CD4-positive, alpha-beta memory T cell (primary cell): ENCODE measurements at regions of chr2 and their contacts with region 1.

Region 1: DNA sequence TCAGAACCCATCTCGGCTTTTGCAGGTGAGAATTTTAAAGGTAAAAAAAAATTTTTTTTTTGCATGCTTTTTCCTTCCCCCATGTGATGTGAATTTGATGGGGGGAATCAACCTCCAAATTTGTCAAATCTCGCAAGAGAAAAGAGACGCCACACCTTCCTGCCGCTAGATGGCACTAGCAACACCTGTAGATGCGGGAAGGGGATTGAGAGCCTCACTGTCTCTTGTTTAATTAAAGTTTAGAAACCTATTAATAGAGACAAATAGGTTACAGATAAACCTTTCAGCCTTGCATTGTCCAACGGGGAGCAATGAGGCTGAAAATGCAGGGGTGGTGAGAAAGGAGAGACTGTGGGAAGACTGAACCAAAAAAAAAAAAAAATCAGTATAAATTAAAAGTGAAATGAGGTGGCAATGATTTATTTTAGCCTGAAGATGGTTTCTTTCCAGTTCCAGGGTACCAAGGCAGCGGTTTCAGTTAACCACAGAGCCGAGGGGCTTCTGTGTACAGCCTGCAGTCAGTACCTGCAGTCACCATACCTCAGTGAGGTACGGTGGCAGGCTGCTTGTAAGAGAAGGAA is 84.6 kb downstream of the NRP2 start:
- DNase-seq: peak in 4 of 5 donors; percentile 13 to 32 (median 22)
- H3K4me3 ChIP-seq: no peak overlapping the region
- H3K4me3 Mint-ChIP-seq: peak overlapping the region in 1 of 8 donors; percentile 17
- H3K27ac ChIP-seq: no peak overlapping the region
- H3K27ac Mint-ChIP-seq: peak overlapping the region in 1 of 7 donors; percentile 23
- H3K4me1 ChIP-seq: no peaks in the 10 kb centered on the region
- H3K4me1 Mint-ChIP-seq: peaks cover 0 to 15% (median 3%) of the 10 kb centered on the region in 4 donors
- H3K27me3 ChIP-seq: no peaks in the 10 kb centered on the region
- H3K27me3 Mint-ChIP-seq: peaks cover 27 to 35% of the 10 kb centered on the region in 2 donors

Region 2: GRCh38 chr2:205660521-205661124 is 106.2 kb before region 1 on chr2:
- CTCF ChIA-PET with region 1: no interaction called
- POLR2A ChIA-PET with region 1: no interaction called
- intact Hi-C with region 1: no loop called
- DNase-seq: peak in 3 of 5 donors; percentile 15 to 25 (median 23)
- H3K4me3 ChIP-seq: no peak overlapping the region
- H3K4me3 Mint-ChIP-seq: peak overlapping the region in 3 of 8 donors; percentile 12 to 15 (median 15)
- H3K27ac ChIP-seq: no peak overlapping the region
- H3K27ac Mint-ChIP-seq: peak overlapping the region in 2 of 7 donors; percentile 67 to 77
- H3K4me1 ChIP-seq: peaks cover 9% of the 10 kb centered on the region
- H3K4me1 Mint-ChIP-seq: peaks cover 6 to 21% (median 15%) of the 10 kb centered on the region in 4 donors
- H3K27me3 ChIP-seq: no peaks in the 10 kb centered on the region
- H3K27me3 Mint-ChIP-seq: peaks cover 2 to 4% of the 10 kb centered on the region in 2 donors

Region 3: DNA sequence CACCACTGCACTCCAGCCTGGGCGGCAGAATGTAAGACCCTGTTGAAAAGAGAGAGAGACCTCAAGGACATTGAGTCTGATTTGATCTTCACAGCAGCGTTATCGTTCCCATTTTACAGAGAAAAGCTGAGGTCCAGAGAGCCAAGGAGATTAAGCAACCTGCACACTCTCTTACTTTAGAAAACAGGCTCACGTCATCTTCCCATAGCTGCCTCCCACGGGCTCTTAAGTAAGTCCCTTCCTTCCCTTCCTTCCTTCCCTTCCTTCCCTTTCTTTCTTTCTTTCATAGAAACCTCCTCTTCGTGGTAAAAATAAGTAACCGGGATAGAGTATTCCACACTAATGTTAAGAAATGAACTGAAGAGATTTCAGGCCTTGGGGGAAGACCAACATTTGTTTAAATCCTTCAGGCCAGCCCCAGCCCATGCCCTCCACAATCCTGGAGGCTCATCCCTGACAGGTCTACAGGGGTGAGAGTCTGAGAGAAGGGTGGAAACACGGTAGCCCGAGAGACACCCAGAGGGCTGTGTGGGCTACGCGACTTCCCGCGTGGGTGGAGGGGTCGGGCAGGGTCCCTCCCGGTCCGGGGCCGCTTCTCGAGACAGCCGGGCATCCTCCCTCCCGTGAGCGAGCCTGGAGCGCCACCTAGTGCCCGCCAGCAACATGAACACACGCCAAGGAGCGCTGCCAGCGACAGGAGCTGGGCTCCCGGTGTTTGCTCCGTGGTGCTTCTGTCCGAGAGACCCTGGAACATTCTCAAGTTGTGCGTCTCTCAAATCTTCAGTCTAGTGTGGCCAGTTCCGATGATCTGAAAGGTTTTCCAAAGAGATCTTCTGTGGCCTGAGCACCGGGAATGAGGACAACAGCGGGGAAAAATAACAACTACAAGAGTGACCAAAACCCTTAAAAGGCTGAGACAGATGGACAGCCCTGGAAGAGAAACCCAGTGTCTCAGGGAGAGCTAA is 158.8 kb after region 1 on chr2:
- CTCF ChIA-PET with region 1: no interaction called
- POLR2A ChIA-PET with region 1: no interaction called
- intact Hi-C with region 1: loop called (anchors 5 kb)
- DNase-seq: peak; percentile 45 to 55 (median 49)
- H3K4me3 ChIP-seq: no peak overlapping the region
- H3K4me3 Mint-ChIP-seq: peak overlapping the region in 4 of 8 donors; percentile 21 to 60 (median 41)
- H3K27ac ChIP-seq: no peak overlapping the region
- H3K27ac Mint-ChIP-seq: peak overlapping the region in 1 of 7 donors; percentile 7
- H3K4me1 ChIP-seq: peaks cover 10% of the 10 kb centered on the region
- H3K4me1 Mint-ChIP-seq: peaks cover 4 to 15% (median 8%) of the 10 kb centered on the region in 4 donors
- H3K27me3 ChIP-seq: peaks cover 8% of the 10 kb centered on the region
- H3K27me3 Mint-ChIP-seq: peaks cover 46 to 51% of the 10 kb centered on the region in 2 donors